Activated CD4-positive, alpha-beta T cell treated with anti-CD3 and anti-CD28 coated beads, Interleukin-2, amount 10 ng/mL, durations not matched to agents 24 days and 14 days (primary cell): ENCODE measurements at regions of chr17 and their contacts with region 1.

Region 1: DNA sequence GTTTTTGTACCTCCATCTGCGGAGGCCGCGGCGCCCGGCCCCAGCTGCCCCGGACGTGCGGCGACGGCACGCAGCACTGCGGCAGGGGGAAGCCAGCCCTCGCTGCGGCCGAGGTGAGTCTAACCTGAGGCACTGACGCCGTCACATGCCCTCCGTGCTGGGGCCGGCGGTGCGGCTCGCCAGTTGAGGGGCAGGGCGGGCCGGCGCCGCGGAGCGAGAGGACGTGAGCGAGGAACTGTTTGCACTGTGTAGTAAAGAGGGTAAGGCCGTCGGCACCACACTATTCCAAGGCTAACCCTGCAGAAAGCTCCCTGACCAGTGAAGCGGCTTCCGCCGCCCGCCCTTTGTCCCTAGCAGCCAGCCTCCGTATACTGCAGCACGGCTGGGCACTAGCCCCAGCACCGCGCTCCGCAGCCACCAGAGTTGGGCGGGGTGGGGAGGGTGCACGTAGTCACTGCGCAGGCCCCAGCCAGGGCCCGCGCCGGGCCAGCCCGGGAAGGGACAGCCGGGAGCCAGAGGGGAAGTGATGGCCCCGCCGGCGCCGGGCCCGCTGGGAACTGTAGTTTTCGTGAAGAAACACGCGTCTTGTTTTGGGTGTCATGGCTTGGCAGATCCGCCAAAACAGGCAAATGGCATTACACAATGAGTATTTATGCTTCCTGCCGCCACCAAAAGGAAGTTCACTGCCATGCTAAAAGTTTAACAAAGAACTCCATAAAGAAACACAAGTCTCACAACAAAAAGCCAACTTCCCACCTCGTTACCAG is 580 bp upstream of the KANSL1 start:
- DNase-seq: peak; percentile 99
- H3K4me3 Mint-ChIP-seq: peak overlapping the region; percentile 78
- H3K27ac Mint-ChIP-seq: peak overlapping the region; percentile 95
- H3K4me1 Mint-ChIP-seq: peaks cover 55% of the 10 kb centered on the region
- H3K27me3 Mint-ChIP-seq: no peaks in the 10 kb centered on the region

Region 2: DNA sequence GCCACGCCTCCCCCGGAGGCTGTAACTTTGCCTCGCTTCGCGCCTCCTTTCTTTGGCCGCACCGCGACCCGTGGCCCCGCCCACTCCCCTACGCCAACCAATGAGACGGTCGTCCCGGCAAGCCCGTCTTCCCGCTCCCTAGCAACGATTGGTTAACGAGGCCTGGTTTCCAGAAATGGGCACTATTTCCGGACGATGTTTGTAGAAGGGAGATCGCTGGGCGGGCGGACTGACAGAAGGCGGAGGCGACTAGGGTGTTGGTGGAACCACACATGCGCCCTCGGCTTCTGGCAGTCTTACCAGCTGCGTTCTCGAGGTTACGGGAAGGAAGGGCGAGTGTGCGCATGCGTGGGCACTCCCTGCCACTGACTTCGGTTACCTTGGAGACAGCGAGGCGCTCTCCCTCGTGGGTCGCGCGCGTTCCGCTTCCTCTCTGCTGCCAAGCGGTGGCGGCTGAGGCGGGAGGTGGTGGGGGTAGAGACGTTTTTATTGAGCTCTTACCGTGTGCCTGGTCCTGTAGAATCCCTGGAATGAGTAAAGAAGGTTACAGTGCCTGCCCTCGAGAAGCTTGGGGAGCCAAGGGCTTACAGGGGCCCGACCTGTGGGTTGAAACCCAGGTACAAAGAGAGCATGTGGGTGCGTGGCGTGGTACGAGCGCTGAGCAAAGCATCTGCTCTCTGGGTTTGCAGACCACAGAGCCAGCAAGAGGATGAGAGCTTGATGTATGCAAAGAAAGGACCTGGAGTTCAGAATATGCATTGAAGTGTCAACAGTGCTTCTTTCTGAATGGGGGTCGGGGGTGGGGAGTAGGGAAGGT is 876.5 kb before region 1 on chr17:
- intact Hi-C with region 1: loop called (anchors 5 kb)
- DNase-seq: peak; percentile 100
- H3K4me3 Mint-ChIP-seq: peak overlapping the region; percentile 90
- H3K27ac Mint-ChIP-seq: peak overlapping the region; percentile 96
- H3K4me1 Mint-ChIP-seq: peaks cover 67% of the 10 kb centered on the region
- H3K27me3 Mint-ChIP-seq: peaks cover 3% of the 10 kb centered on the region

Region 3: GRCh38 chr17:46056800-46057304 is 137.0 kb before region 1 on chr17:
- intact Hi-C with region 1: loop called (anchors 2 kb)
- DNase-seq: no peak
- H3K4me3 Mint-ChIP-seq: no peak overlapping the region
- H3K27ac Mint-ChIP-seq: no peak overlapping the region
- H3K4me1 Mint-ChIP-seq: peaks cover 25% of the 10 kb centered on the region
- H3K27me3 Mint-ChIP-seq: no peaks in the 10 kb centered on the region

Region 4: GRCh38 chr17:46154151-46154816 is 39.5 kb before region 1 on chr17:
- intact Hi-C with region 1: loop called (anchors 1 kb)
- DNase-seq: peak; percentile 75
- H3K4me3 Mint-ChIP-seq: peak overlapping the region; percentile 70
- H3K27ac Mint-ChIP-seq: peak overlapping the region; percentile 87
- H3K4me1 Mint-ChIP-seq: peaks cover 67% of the 10 kb centered on the region
- H3K27me3 Mint-ChIP-seq: no peaks in the 10 kb centered on the region

Region 5: DNA sequence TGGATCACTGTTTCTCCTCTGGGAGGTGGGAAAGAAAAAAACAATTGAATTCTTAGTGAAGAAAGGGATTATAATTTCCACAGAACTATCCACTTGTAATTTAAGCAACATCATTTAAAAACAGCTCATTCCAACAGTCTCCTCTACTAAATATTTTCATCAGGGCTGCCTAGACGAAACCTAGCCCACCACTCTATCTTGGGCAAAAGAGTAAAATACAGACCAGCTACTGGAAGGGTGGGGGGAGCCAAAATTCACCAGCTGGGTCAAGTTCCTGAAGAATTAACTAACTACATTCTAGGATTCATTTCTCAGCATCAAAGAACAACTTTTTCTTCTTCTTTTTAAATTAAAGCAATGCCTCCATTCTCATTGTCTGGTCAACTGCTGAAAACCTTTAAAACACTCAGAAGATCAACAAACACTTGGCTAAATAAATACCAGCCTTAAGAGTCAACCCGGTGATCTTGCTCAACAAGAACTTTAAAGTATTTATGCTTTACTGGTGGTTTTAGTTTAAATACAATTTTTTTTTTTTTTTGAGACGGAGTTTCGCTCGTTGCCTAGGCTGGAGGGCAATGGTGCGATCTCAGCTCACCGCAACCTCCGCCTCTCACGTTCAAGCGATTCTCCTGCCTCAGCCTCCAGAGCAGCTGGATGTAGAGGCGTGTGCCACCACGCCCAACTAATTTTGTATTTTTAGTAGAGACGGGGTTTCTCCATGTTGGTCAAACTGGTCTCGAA is 25.8 kb before region 1 on chr17:
- intact Hi-C with region 1: no loop called
- DNase-seq: no peak
- H3K4me3 Mint-ChIP-seq: no peak overlapping the region
- H3K27ac Mint-ChIP-seq: no peak overlapping the region
- H3K4me1 Mint-ChIP-seq: peaks cover 57% of the 10 kb centered on the region
- H3K27me3 Mint-ChIP-seq: no peaks in the 10 kb centered on the region

Region 6: DNA sequence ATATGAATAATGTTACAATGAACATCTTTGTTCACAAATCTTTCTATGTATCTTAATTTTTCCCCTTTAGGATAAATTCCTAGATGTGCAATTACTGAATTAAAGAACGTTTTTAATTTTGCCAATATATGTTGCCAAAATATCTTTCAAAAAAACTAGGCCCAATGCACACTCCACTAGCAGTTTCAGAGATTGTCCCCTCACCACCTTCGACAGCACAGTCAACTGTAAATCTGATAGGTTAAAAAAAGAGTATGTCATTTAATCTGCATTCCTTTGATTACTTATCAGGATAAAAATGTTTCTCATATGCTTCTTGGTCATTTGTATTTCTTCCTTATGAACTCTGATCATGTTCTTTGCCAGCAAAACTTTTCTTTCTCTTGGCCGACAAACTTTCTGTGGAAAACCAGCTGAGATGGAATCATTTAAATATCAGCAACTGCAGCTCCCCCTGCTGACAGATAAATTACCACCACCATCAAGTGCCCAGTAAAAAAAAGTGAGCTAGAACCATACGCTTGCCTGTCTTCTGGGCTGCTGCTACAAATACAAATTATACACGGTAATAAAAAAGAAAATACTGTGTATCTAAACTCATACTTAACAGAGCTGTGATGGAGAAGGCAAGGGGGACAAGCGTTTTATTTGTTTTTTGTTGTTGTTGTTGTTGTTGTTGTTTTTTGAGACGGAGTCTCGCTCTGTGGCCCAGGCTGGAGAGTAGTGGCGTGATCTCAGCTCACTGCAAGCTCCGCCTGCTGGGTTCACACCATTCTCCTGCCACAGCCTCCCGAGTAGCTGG is 19.0 kb after region 1 on chr17:
- intact Hi-C with region 1: loop called (anchors 1 kb)
- DNase-seq: peak; percentile 89
- H3K4me3 Mint-ChIP-seq: no peak overlapping the region
- H3K27ac Mint-ChIP-seq: no peak overlapping the region
- H3K4me1 Mint-ChIP-seq: peaks cover 21% of the 10 kb centered on the region
- H3K27me3 Mint-ChIP-seq: no peaks in the 10 kb centered on the region

Region 7: DNA sequence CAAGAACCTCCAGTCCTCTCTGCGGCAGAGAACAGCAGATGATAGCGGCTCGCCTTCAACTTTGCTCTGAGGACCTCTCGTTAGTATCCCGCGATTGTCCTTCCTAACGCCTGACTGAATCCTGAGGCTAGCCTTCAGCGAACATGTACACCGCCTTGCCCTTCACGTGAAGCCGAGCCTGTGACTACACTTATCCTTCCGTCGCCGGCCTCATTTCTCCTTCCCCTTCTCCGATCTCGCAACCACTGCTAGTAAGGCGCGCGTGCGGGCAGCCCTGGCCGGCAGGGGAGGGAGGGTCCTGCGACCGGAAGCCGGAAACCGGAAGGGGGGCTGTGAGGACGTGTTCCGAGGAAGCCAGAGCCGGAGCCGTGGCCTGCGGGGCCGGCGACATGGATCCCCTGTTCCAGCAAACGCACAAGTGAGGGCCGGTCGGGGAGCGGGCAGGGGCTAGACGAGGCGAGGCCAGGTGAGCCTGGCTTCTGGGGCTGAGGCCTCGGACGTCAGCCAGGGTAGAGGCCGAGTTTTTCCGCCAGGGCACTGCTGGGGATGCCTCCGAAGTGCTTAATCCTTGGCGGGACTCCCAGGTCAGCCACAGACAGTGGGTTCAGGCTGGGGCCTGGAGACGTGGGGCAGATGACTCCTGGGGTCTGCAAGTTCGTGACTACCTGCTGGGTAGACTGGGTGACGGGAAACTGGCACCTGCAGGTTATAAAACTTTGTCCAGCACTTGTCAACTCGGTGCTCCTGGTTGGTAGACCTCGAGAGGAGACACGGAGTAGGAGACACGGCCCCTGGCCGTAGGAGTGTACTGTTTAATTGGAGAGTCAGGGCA is 729.2 kb after region 1 on chr17 and contains the start of gene GOSR2:
- intact Hi-C with region 1: loop called (anchors 5 kb)
- DNase-seq: peak; percentile 97
- H3K4me3 Mint-ChIP-seq: peak within 1 kb of the TSS; percentile 87
- H3K27ac Mint-ChIP-seq: peak within 1 kb of the TSS; percentile 100
- H3K4me1 Mint-ChIP-seq: peaks cover 35% of the 10 kb centered on the region
- H3K27me3 Mint-ChIP-seq: peaks cover 2% of the 10 kb centered on the region
- total RNA-seq, gene GOSR2: 57.9 and 62.2 TPM in 2 replicates